Activated naive CD4-positive, alpha-beta T cell treated with anti-CD3 and anti-CD28 coated beads, Interleukin-2, amount 10 ng/mL, durations not matched to agents 7 days and 5 days (primary cell): ENCODE measurements at regions of chr1 and their contacts with region 1.

Region 1: DNA sequence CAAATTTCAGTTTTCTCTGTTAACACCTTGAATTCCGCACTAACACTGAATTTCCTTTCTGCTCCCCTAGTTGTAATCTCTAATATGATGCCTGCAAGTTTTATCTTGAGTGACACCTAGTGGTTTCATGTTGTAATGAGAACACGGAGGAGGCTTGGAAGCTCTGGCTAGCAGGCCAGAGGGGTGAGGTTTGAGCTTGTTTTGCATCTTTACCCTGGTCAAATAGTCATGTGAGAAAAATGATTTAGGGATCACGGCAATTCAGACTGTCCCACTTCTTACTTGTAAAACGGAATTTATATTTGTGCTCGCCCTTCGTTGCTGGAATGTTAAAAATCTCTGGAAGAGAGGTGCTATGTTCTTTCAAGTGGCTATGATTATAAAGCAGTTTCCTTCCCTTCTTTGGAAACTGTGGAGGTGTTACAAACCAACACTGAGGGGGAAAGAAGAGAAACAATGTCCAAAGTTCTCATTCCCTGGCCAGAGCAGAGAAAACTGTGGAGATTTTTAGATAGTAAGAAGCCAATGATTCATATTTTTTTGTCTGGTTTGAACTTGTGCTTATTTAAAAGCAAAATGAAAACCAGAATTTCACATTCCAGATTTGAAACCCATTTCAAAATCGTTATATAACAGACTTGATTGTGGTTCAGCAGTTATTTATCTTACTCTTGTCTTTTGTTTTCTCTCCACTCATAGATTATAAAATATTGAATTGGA is 5.3 kb upstream of the MROH9 start:
- DNase-seq: no peak
- H3K4me3 Mint-ChIP-seq: no peak overlapping the region
- H3K27ac Mint-ChIP-seq: no peak overlapping the region
- H3K4me1 Mint-ChIP-seq: no peaks in the 10 kb centered on the region
- H3K27me3 Mint-ChIP-seq: peaks cover 8% of the 10 kb centered on the region

Region 2: DNA sequence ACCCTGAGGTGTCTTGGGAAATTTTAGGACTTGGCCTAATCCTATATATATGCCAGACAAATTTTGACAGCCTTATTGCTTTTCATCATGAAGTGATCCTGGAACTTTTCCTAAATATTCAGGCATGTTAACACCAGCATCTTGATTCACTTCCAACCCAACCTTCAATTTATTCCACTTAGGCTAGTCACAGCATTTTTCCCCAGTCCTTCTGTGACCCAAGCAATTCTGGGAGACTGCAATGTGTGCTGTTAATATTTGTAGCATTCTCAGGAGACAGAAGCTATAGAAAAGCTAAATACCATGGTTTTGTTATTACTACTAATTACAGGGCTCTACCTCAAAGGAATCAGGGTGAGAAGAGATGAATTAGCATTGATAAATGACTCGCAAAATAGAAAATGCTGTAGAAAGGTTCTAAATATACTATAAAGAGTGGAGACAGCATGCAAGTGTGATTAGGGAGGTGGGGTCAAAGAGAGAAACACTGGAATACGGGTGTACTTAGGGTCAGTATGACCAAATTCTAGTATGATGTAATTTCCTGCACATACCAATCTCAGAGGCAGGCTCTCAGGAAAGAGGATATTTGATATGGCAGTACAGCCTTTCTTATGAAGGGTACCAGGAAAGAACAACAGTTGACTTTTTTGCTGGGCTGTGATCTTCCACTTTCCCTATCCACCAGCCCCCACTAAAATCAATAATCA is 237.0 kb before region 1 on chr1:
- CTCF ChIA-PET with region 1: interaction called, 10 read pairs
- DNase-seq: no peak
- H3K4me3 Mint-ChIP-seq: no peak overlapping the region
- H3K27ac Mint-ChIP-seq: no peak overlapping the region
- H3K4me1 Mint-ChIP-seq: no peaks in the 10 kb centered on the region
- H3K27me3 Mint-ChIP-seq: peaks cover 4% of the 10 kb centered on the region

Region 3: GRCh38 chr1:170872663-170873062 is 57.3 kb before region 1 on chr1:
- CTCF ChIA-PET with region 1: no interaction called
- DNase-seq: no peak
- H3K4me3 Mint-ChIP-seq: no peak overlapping the region
- H3K27ac Mint-ChIP-seq: no peak overlapping the region
- H3K4me1 Mint-ChIP-seq: no peaks in the 10 kb centered on the region
- H3K27me3 Mint-ChIP-seq: no peaks in the 10 kb centered on the region

Region 4: GRCh38 chr1:170910273-170910672 is 19.7 kb before region 1 on chr1:
- CTCF ChIA-PET with region 1: no interaction called
- DNase-seq: no peak
- H3K4me3 Mint-ChIP-seq: no peak overlapping the region
- H3K27ac Mint-ChIP-seq: no peak overlapping the region
- H3K4me1 Mint-ChIP-seq: no peaks in the 10 kb centered on the region
- H3K27me3 Mint-ChIP-seq: no peaks in the 10 kb centered on the region